ENCODE measurements at regions of chr14 and their contacts with region 1.

Region 1: GRCh38 chr14:49497725-49498348 is 88.3 kb downstream of the RPS29 start:
- DNase-seq: peak in 3 of 4 donors; percentile 12 to 42 (median 30)
- ATAC-seq: peak; percentile 73
- H3K4me3 ChIP-seq: no peak overlapping the region
- H3K27ac ChIP-seq: no peak overlapping the region
- H3K4me1 ChIP-seq: no peaks in the 10 kb centered on the region
- H3K27me3 ChIP-seq: no peaks in the 10 kb centered on the region
- CTCF ChIP-seq: peak; percentile 54 to 91 (median 85)
- POLR2A ChIP-seq: no peak

Region 2: GRCh38 chr14:49461529-49462401 is 36.1 kb before region 1 on chr14:
- intact Hi-C with region 1: loop called (anchors 5 kb)
- DNase-seq: peak; percentile 69 to 83 (median 73)
- ATAC-seq: peak; percentile 79
- H3K4me3 ChIP-seq: no peak overlapping the region
- H3K27ac ChIP-seq: no peak overlapping the region
- H3K4me1 ChIP-seq: no peaks in the 10 kb centered on the region
- H3K27me3 ChIP-seq: no peaks in the 10 kb centered on the region
- CTCF ChIP-seq: peak; percentile 41 to 91 (median 79)
- POLR2A ChIP-seq: no peak